Mammary epithelial cell (primary cell): ENCODE measurements at regions of chr16 and their contacts with region 1.

Region 1: DNA sequence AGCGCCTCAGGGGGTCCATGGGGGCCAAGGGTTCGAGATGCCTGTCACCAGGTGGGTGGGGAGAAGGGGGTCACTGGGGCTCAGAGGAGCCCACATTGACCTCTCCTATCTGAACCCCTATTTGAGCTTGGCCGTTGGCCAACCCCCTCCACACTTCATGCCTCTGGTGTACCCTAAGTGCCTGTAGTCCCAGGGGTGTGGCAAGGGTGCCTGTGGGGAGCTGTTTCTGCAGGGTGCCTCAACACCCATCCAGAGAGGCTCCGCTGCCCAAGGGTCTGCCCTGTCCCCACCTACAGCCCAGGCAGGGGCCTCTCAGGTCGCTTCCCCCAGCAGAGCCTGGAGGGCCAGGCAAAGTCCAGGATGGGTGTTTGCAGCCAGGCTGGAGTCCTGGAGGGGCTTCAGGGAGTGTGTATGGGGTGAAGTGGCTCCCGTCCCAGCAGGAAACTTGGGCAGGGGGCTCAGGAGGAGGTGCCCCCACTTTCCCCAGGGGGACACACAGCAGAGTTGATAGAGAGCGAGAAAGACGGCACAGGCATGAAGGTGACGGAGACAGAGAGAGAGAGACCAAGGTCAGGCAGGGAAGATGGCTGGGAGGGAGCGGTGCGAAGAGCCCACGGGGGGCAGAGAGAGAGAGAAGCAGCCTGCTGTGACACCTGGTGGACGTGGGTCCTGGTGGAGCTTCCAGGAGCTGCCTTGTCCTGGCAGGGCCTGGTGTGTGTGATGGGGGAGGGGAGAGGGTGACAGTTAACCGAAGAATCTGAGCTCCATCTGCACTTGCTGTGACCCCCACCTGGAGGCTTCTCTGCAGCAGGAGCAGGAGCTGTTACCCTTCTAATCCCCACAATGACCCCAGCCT is at the start of gene SEPTIN12:
- DNase-seq: no peak
- H3K4me3 ChIP-seq: no peak within 1 kb of the TSS
- H3K27ac ChIP-seq: no peak within 1 kb of the TSS
- H3K4me1 ChIP-seq: no peaks in the 10 kb centered on the region
- H3K27me3 ChIP-seq: no peaks in the 10 kb centered on the region
- CTCF ChIP-seq: no peak
- total RNA-seq, gene SEPTIN12: not detected

Region 2: DNA sequence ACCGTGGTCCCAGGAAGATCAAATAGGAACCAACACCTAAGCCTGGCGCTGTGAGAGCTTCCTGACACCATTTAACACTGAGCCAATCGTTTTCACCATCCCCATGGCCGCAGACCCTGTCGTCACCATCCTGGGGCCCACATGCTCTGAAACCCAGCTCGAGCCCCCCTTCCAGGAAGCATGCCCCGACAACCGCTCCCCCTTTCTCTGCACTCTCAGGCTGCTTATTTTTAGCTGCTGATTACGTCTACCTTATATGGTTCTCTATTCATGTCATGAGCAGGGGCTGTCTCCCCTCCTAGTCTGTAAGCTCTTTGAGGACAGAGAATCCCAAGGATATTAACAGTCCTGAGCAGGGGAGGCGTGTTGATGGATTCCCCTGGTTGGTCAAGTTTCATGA is 556.5 kb before region 1 on chr16:
- CTCF ChIA-PET with region 1: no interaction called
- dilution Hi-C with region 1: no loop called
- in situ Hi-C with region 1: no loop called
- intact Hi-C with region 1: no loop called
- DNase-seq: no peak
- H3K4me3 ChIP-seq: no peak overlapping the region
- H3K27ac ChIP-seq: no peak overlapping the region
- H3K4me1 ChIP-seq: no peaks in the 10 kb centered on the region
- H3K27me3 ChIP-seq: peaks cover 5% of the 10 kb centered on the region
- CTCF ChIP-seq: no peak

Region 3: GRCh38 chr16:4673387-4674046 is 114.3 kb before region 1 on chr16:
- CTCF ChIA-PET with region 1: interaction called, 11 read pairs
- dilution Hi-C with region 1: no loop called
- in situ Hi-C with region 1: no loop called
- intact Hi-C with region 1: no loop called
- DNase-seq: no peak
- H3K4me3 ChIP-seq: no peak overlapping the region
- H3K27ac ChIP-seq: no peak overlapping the region
- H3K4me1 ChIP-seq: peaks cover 9% of the 10 kb centered on the region
- H3K27me3 ChIP-seq: no peaks in the 10 kb centered on the region
- CTCF ChIP-seq: no peak